H1 (cell line): ENCODE measurements at regions of chr4 and their contacts with region 1.

Region 1: GRCh38 chr4:170259631-170260153 is 169.9 kb upstream of the AADAT start:
- DNase-seq: peak; percentile 84 to 89
- H3K4me3 ChIP-seq: no peak overlapping the region
- H3K27ac ChIP-seq: no peak overlapping the region
- H3K4me1 ChIP-seq: no peaks in the 10 kb centered on the region
- H3K27me3 ChIP-seq: no peaks in the 10 kb centered on the region
- CTCF ChIP-seq: peak; percentile 56 to 99 (median 97)
- EP300 ChIP-seq: no peak
- POLR2A ChIP-seq: no peak
- RAD21 ChIP-seq: peak; percentile 99

Region 2: GRCh38 chr4:169840554-169840953 is 419.1 kb before region 1 on chr4:
- CTCF ChIA-PET with region 1: no interaction called
- POLR2A ChIA-PET with region 1: no interaction called
- DNase-seq: no peak
- H3K4me3 ChIP-seq: no peak overlapping the region
- H3K27ac ChIP-seq: no peak overlapping the region
- H3K4me1 ChIP-seq: no peaks in the 10 kb centered on the region
- H3K27me3 ChIP-seq: no peaks in the 10 kb centered on the region
- CTCF ChIP-seq: no peak
- EP300 ChIP-seq: no peak
- POLR2A ChIP-seq: no peak
- RAD21 ChIP-seq: no peak

Region 3: DNA sequence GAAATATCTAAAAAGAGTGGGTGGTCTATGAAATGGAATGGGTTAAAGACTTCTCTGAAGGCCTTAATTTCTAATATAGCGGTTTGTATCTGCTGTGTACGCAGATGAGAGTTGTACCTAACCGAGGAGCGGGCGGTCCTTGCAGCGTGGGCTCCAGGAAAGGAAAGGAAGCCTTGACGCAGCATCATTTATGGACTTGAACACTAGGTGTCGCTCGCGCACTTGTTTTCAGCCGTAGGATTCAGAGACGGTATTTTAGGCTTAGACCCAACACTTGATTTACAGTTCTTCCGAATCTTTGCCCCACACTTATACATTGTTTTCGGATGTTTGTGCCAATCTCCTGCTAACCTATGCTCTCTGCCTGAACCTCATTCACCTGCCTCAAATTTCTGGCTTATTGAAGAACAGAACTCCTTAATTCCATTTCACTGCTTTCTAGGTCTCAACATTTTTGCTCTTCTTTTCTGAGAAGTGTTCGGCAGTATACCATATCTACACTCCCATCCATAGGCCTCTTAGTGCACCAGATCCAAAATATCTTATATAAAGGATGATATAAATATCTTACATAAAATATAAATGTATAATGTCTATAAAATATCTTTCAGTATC is 121.0 kb before region 1 on chr4:
- CTCF ChIA-PET with region 1: interaction called, 26 read pairs
- POLR2A ChIA-PET with region 1: no interaction called
- DNase-seq: peak; percentile 36 to 89
- H3K4me3 ChIP-seq: no peak overlapping the region
- H3K27ac ChIP-seq: no peak overlapping the region
- H3K4me1 ChIP-seq: no peaks in the 10 kb centered on the region; a peak in 1 of 7 replicates
- H3K27me3 ChIP-seq: no peaks in the 10 kb centered on the region
- CTCF ChIP-seq: peak; percentile 76 to 90 (median 85)
- EP300 ChIP-seq: no peak
- POLR2A ChIP-seq: no peak
- RAD21 ChIP-seq: peak; percentile 92 to 93

Region 4: DNA sequence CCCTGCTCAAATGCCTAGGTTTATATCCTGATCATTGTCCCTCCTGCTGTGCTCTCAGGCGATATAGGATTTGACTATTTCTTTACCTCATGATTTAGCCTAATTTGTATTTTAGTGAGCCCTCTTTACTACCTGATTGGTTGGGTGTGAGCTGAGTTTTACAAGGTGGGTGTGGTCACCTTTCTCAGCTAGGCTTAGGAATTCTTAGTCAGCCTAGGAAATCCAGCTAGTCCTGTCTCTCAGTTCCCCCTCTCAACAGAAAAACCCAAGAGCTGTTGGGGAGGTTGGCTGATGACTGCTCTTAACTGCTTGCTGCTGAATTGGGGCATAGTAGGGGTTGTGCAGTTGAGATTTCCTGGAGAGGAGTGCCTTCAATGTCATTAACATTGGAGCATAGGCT is 69.4 kb before region 1 on chr4:
- CTCF ChIA-PET with region 1: interaction called, 12 read pairs
- POLR2A ChIA-PET with region 1: no interaction called
- DNase-seq: no peak
- H3K4me3 ChIP-seq: no peak overlapping the region
- H3K27ac ChIP-seq: no peak overlapping the region
- H3K4me1 ChIP-seq: peaks cover 0 to 2% (median 1%) of the 10 kb centered on the region in 4 experiments; a peak in 2 of 7 replicates
- H3K27me3 ChIP-seq: peaks cover 0 to 4% (median 0%) of the 10 kb centered on the region in 4 experiments; a peak in 2 of 7 replicates
- CTCF ChIP-seq: no peak
- EP300 ChIP-seq: no peak
- POLR2A ChIP-seq: no peak
- RAD21 ChIP-seq: no peak

Region 5: GRCh38 chr4:170242471-170242870 is 17.2 kb before region 1 on chr4:
- CTCF ChIA-PET with region 1: interaction called, 53 read pairs
- POLR2A ChIA-PET with region 1: no interaction called
- DNase-seq: no peak
- H3K4me3 ChIP-seq: no peak overlapping the region
- H3K27ac ChIP-seq: no peak overlapping the region
- H3K4me1 ChIP-seq: peaks cover 0 to 4% (median 0%) of the 10 kb centered on the region in 4 experiments; a peak in 2 of 7 replicates
- H3K27me3 ChIP-seq: no peaks in the 10 kb centered on the region
- CTCF ChIP-seq: no peak
- EP300 ChIP-seq: no peak
- POLR2A ChIP-seq: no peak
- RAD21 ChIP-seq: no peak

Region 6: GRCh38 chr4:170278460-170278859 is 18.8 kb after region 1 on chr4:
- CTCF ChIA-PET with region 1: interaction called, 42 read pairs
- POLR2A ChIA-PET with region 1: no interaction called
- DNase-seq: no peak
- H3K4me3 ChIP-seq: no peak overlapping the region
- H3K27ac ChIP-seq: no peak overlapping the region
- H3K4me1 ChIP-seq: no peaks in the 10 kb centered on the region
- H3K27me3 ChIP-seq: no peaks in the 10 kb centered on the region
- CTCF ChIP-seq: no peak
- EP300 ChIP-seq: no peak
- POLR2A ChIP-seq: no peak
- RAD21 ChIP-seq: no peak

Region 7: GRCh38 chr4:170476145-170476750 is 216.6 kb after region 1 on chr4:
- CTCF ChIA-PET with region 1: no interaction called
- POLR2A ChIA-PET with region 1: no interaction called
- DNase-seq: no peak
- H3K4me3 ChIP-seq: no peak overlapping the region
- H3K27ac ChIP-seq: no peak overlapping the region
- H3K4me1 ChIP-seq: no peaks in the 10 kb centered on the region
- H3K27me3 ChIP-seq: no peaks in the 10 kb centered on the region
- CTCF ChIP-seq: no peak
- EP300 ChIP-seq: no peak
- POLR2A ChIP-seq: no peak
- RAD21 ChIP-seq: no peak

Region 8: DNA sequence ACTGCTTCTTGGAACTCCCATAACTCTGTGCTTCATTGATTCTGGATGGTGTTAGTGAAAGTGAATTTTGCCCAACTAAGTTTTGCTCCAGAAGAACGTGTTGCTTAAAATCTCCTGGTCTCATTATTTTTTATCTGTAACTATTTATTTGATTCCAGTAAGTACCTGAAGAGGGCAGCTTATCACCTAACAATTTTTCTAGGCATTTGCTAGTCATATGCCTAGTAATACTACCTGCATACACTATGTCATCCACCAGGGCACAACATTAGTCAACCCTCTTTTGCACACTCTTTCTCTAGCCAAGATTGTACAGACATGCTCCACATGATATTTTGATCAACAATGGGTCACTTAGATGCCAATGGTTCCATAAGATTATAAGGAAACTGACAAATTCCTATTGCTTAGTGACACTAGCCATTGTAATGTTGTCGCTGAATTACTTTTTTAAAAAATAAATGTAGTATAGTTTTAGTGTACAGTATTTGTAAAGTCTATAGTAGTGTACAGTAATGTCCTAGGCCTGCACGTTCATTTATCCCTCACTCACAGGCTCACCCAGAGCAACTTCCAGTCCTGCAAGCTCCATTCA is 330.0 kb after region 1 on chr4:
- CTCF ChIA-PET with region 1: interaction called, 20 read pairs
- POLR2A ChIA-PET with region 1: no interaction called
- DNase-seq: no peak
- H3K4me3 ChIP-seq: no peak overlapping the region
- H3K27ac ChIP-seq: no peak overlapping the region
- H3K4me1 ChIP-seq: no peaks in the 10 kb centered on the region
- H3K27me3 ChIP-seq: no peaks in the 10 kb centered on the region
- CTCF ChIP-seq: peak in 2 of 3 experiments; percentile 62 to 69; a peak in 3 of 4 replicates
- EP300 ChIP-seq: no peak
- POLR2A ChIP-seq: no peak
- RAD21 ChIP-seq: peak; percentile 66 to 68